ENCODE measurements at regions of chr17 and their contacts with region 1.

Region 1: DNA sequence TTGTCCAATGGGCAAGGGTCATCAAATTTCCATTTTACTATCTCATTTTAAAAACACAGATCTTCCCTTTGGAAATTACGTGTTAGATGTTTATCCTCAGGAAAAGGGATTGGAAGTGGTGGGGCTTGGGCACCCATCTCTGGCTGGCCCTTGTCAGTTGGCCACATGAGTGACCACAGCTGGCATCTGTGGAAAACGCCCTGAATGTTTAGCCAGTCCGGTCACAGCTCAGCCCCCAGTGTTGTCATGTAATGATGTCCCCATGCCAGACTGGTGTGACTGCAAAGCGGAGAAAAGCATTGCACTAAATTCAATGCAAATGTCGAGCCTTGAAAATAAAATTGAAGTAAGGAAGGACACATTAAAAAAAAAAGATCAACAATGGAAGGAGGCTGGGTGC is 53.0 kb downstream of the TMC6 start:
- DNase-seq: no peak

Region 2: DNA sequence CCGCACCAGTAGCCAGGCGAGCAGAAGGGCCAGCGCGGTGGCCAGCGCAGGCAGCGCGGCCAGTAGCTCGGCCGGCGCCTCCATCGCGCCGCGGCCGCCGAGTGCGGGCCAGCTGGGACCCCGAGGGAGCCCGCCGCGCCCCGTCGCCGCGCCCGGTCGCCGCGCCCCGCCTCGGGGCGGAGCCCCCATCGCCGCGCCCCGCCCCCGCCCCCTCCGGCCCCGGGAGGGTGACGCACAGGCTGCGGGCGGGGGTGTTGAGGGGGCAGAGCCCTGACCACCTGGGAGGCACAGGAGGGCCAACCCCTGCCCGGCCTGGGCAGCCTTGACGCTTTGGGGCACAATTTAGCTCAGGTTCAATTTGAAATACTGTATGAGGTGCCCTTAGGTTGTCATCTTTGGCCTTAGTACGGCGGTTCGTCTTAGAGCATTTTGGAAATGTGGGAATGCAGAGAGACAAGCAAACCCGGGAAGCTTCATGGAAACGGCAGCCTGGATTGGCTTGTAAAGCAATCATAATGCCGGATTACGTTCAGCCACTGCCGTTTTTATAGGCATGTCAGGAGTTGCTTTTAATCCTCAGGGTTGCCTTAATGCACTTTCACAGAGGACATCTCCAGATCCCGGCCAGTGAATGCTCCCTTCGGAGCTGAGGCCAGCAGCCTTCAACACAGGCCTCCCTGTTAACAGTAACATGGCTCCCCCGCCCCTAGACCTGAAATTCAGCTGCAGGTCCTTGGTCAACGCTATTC is 1364.5 kb before region 1 on chr17 and contains the start of gene MXRA7:
- intact Hi-C with region 1: no loop called
- DNase-seq: peak; percentile 92
- total RNA-seq, gene MXRA7: 343 to 428 TPM

Region 3: GRCh38 chr17:78019367-78019975 is 56.1 kb before region 1 on chr17:
- intact Hi-C with region 1: loop called in 1 of 2 experiments (anchors 10 kb)
- DNase-seq: no peak

Measured in posterior vena cava (tissue), 2 donors.